ENCODE measurements at regions of chr4 and their contacts with region 1.

Region 1: DNA sequence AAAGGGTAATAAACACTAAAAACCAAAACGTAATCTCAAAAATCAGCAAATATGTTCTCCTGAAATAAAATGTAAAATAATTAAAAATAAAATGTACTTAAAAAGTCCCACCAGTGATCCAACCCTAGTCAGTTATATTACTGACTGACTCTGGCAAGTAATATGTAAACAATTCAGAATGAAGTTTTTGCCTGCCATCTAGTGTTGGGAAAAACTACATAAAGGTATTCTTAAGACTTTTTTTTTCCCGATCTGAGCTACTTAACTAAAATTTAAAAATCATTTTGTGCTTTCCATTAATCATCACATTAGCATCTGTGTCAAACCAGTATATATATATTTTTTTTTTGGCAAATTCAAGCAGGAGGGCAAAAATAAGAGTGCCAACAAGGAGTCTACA is 24.0 kb downstream of the RCHY1 start:
- DNase-seq: peak in 1 of 2 experiments; percentile 31
- ATAC-seq: peak in 1 of 2 experiments; percentile 54; a peak in 2 of 6 replicates
- H3K4me3 ChIP-seq: no peak overlapping the region
- H3K27ac ChIP-seq: no peak overlapping the region
- H3K4me1 ChIP-seq: peaks cover 11% of the 10 kb centered on the region; the same call in 1 of the 3 replicates
- CTCF ChIP-seq: peak; percentile 46
- EP300 ChIP-seq: no peak
- POLR2A ChIP-seq: no peak
- RAD21 ChIP-seq: peak; percentile 23 to 54; a peak in 3 of 5 replicates

Region 2: GRCh38 chr4:74932816-74933561 is 557.2 kb before region 1 on chr4 and contains the start of gene PARM1:
- CTCF ChIA-PET with region 1: interaction called, 11 read pairs
- POLR2A ChIA-PET with region 1: no interaction called
- DNase-seq: peak; percentile 62 to 72
- ATAC-seq: peak; percentile 87 to 92
- H3K4me3 ChIP-seq: peak within 1 kb of the TSS; percentile 50
- H3K27ac ChIP-seq: peak within 1 kb of the TSS in 1 of 2 experiments; percentile 44; a peak in 3 of 6 replicates
- H3K4me1 ChIP-seq: no peaks in the 10 kb centered on the region
- CTCF ChIP-seq: peak; percentile 69
- EP300 ChIP-seq: no peak
- POLR2A ChIP-seq: peak; percentile 19; the same call in 1 of the 2 replicates
- RAD21 ChIP-seq: peak; percentile 71 to 75
- polyA plus RNA-seq, gene PARM1: 2.5 and 5.2 TPM in 2 replicates

Region 3: GRCh38 chr4:75963558-75963957 is 473.4 kb after region 1 on chr4:
- CTCF ChIA-PET with region 1: no interaction called
- POLR2A ChIA-PET with region 1: no interaction called
- DNase-seq: no peak
- ATAC-seq: no peak
- H3K4me3 ChIP-seq: no peak overlapping the region
- H3K27ac ChIP-seq: no peak overlapping the region
- H3K4me1 ChIP-seq: no peaks in the 10 kb centered on the region
- CTCF ChIP-seq: no peak
- EP300 ChIP-seq: no peak
- POLR2A ChIP-seq: no peak
- RAD21 ChIP-seq: no peak

Measured in A549 (cell line).